ENCODE measurements at regions of chr18 and their contacts with region 1.

Region 1: DNA sequence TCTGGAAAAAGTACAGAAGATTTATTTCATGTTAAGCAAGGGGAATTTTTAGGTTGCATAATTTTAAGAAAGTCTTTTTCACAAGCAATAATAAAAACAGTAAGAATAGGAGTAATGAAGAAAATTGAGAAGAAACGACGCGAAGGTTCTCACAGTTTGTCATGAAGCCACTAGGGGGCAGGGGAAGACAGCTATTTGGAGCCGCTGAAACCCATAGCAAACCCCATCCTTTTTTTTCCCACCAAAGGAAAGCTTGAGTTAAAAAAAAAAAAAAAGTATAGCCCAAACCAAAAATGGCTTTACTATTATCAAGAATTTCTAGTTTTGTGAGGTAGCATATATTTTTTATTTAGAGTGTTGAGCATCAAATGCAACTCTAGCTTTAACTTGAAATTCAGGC is 300.9 kb downstream of the PHLPP1 start:
- DNase-seq: no peak
- ATAC-seq: peak; percentile 75
- H3K4me3 Mint-ChIP-seq: no peak overlapping the region
- H3K27ac Mint-ChIP-seq: no peak overlapping the region
- H3K4me1 Mint-ChIP-seq: no peaks in the 10 kb centered on the region
- H3K27me3 Mint-ChIP-seq: peaks cover 13% of the 10 kb centered on the region
- CTCF ChIP-seq: no peak

Region 2: DNA sequence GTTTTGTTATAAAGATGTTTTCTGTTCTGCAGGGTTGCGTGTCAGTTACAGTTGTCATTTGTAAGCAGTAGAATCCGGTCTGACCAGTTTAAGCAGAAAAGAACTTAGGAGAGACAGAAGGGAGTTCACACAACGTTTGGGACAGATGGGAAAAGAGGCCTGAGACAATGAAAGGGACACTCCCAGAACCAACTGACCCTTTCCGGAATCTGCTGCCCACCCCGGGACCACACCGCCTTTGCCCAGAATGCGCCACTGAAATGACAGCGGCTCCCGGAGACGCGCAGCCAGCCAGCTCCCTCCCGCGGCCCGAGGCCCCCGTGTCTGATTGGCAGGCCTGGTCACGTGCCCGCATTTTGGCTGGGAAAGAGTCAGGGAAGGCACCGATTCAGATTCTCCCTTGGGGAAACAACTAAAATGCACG is 58.7 kb after region 1 on chr18:
- CTCF ChIA-PET with region 1: interaction called, 8 read pairs
- POLR2A ChIA-PET with region 1: no interaction called
- intact Hi-C with region 1: loop called (anchors 1 kb)
- DNase-seq: peak; percentile 45
- ATAC-seq: peak; percentile 58
- H3K4me3 Mint-ChIP-seq: peak overlapping the region; percentile 78
- H3K27ac Mint-ChIP-seq: peak overlapping the region; percentile 0
- H3K4me1 Mint-ChIP-seq: peaks cover 25% of the 10 kb centered on the region
- H3K27me3 Mint-ChIP-seq: no peaks in the 10 kb centered on the region
- CTCF ChIP-seq: no peak

Region 3: DNA sequence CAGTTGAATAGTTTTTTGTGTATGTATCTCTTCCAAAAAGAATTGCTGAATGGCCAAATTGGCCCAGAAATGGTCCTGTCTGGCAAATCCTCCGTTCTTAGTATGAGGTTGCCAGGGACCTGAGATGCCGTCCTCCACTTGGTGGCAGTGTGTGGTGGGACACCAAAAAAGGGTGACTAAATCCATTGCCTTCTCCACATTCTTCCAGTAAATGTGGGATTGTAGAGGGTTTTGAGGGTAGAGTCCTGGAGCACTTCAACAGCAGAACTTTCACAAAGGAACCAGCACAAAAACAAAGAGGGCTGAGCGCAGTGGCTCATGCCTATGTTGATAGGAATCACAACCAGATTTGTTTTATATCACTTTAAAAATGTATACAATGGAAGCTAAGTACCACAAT is 103.4 kb after region 1 on chr18:
- CTCF ChIA-PET with region 1: interaction called, 10 read pairs
- POLR2A ChIA-PET with region 1: no interaction called
- intact Hi-C with region 1: no loop called
- DNase-seq: no peak
- ATAC-seq: no peak
- H3K4me3 Mint-ChIP-seq: no peak overlapping the region
- H3K27ac Mint-ChIP-seq: no peak overlapping the region
- H3K4me1 Mint-ChIP-seq: peaks cover 5% of the 10 kb centered on the region
- H3K27me3 Mint-ChIP-seq: peaks cover 2% of the 10 kb centered on the region
- CTCF ChIP-seq: no peak

Region 4: GRCh38 chr18:63131106-63131958 is 115.1 kb after region 1 on chr18:
- CTCF ChIA-PET with region 1: interaction called, 26 read pairs
- POLR2A ChIA-PET with region 1: interaction called, 3 read pairs
- intact Hi-C with region 1: loop called (anchors 1 kb)
- DNase-seq: no peak
- ATAC-seq: peak; percentile 65
- H3K4me3 Mint-ChIP-seq: no peak overlapping the region
- H3K27ac Mint-ChIP-seq: peak overlapping the region; percentile 70
- H3K4me1 Mint-ChIP-seq: peaks cover 35% of the 10 kb centered on the region
- H3K27me3 Mint-ChIP-seq: no peaks in the 10 kb centered on the region
- CTCF ChIP-seq: no peak

Region 5: GRCh38 chr18:63267975-63268721 is 251.9 kb after region 1 on chr18:
- CTCF ChIA-PET with region 1: no interaction called
- POLR2A ChIA-PET with region 1: no interaction called
- intact Hi-C with region 1: loop called (anchors 5 kb)
- DNase-seq: no peak
- ATAC-seq: no peak
- H3K4me3 Mint-ChIP-seq: no peak overlapping the region
- H3K27ac Mint-ChIP-seq: peak overlapping the region; percentile 10
- H3K4me1 Mint-ChIP-seq: peaks cover 54% of the 10 kb centered on the region
- H3K27me3 Mint-ChIP-seq: no peaks in the 10 kb centered on the region
- CTCF ChIP-seq: no peak

Region 6: GRCh38 chr18:63339920-63340484 is 323.7 kb after region 1 on chr18:
- CTCF ChIA-PET with region 1: interaction called, 55 read pairs
- POLR2A ChIA-PET with region 1: interaction called, 5 read pairs
- intact Hi-C with region 1: loop called (anchors 1 kb)
- DNase-seq: no peak
- ATAC-seq: peak; percentile 45
- H3K4me3 Mint-ChIP-seq: no peak overlapping the region
- H3K27ac Mint-ChIP-seq: no peak overlapping the region
- H3K4me1 Mint-ChIP-seq: no peaks in the 10 kb centered on the region
- H3K27me3 Mint-ChIP-seq: no peaks in the 10 kb centered on the region
- CTCF ChIP-seq: no peak

Measured in activated B cell treated with CpG ODN at 0.5 μM for 24 hours (primary cell).